Mammary epithelial cell (primary cell): ENCODE measurements at regions of chr12 and their contacts with region 1.

Region 1: GRCh38 chr12:44589697-44590096 is 286.4 kb downstream of the NELL2 start:
- DNase-seq: peak; percentile 46
- H3K4me3 ChIP-seq: no peak overlapping the region
- H3K27ac ChIP-seq: no peak overlapping the region
- H3K4me1 ChIP-seq: no peaks in the 10 kb centered on the region
- H3K27me3 ChIP-seq: no peaks in the 10 kb centered on the region
- CTCF ChIP-seq: no peak

Region 2: DNA sequence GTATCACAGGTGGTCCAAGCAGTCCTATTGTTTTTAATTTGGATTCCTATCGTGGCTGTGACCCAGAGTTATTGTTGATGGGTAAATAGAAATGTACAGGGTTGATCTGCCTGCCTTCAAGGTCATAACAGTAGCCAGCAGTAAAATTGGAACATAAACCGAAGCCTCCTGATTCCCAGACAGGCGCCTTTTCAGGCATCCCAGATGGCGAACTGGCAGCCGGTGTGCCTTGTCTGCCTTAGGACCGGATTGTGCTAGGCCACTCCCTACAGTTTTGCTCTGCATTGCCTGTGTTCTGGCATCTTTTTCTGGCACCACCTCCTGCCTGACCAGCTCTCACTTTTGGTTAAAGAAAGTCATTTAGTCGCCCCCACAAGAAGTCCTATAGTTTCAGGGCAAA is 731.6 kb before region 1 on chr12:
- CTCF ChIA-PET with region 1: no interaction called
- dilution Hi-C with region 1: no loop called
- in situ Hi-C with region 1: no loop called
- intact Hi-C with region 1: no loop called
- DNase-seq: no peak
- H3K4me3 ChIP-seq: no peak overlapping the region
- H3K27ac ChIP-seq: no peak overlapping the region
- H3K4me1 ChIP-seq: peaks cover 18% of the 10 kb centered on the region
- H3K27me3 ChIP-seq: no peaks in the 10 kb centered on the region
- CTCF ChIP-seq: no peak

Region 3: DNA sequence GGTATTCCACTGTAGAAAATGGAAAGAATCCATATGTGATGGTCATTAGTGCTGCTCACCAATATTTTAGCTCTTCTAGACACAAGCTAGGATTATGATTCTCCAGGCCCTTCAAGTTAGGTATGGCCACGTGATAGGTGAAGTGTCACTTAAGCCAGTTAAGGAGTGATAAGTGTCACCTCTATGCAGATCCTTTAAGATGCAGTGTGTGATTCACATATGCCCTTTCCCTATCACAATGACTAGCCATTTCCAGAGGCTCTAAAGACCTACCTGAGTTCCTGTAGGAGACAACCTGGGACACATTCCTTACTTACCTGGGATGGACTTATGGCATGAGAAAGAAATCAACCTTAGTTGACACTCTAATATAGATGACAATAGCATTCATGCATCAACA is 56.8 kb before region 1 on chr12:
- CTCF ChIA-PET with region 1: no interaction called
- dilution Hi-C with region 1: no loop called
- in situ Hi-C with region 1: no loop called
- intact Hi-C with region 1: loop called (anchors 1 kb)
- DNase-seq: no peak
- H3K4me3 ChIP-seq: no peak overlapping the region
- H3K27ac ChIP-seq: no peak overlapping the region
- H3K4me1 ChIP-seq: no peaks in the 10 kb centered on the region
- H3K27me3 ChIP-seq: peaks cover 1% of the 10 kb centered on the region
- CTCF ChIP-seq: no peak